ENCODE measurements at regions of chr1 and their contacts with region 1.

Region 1: DNA sequence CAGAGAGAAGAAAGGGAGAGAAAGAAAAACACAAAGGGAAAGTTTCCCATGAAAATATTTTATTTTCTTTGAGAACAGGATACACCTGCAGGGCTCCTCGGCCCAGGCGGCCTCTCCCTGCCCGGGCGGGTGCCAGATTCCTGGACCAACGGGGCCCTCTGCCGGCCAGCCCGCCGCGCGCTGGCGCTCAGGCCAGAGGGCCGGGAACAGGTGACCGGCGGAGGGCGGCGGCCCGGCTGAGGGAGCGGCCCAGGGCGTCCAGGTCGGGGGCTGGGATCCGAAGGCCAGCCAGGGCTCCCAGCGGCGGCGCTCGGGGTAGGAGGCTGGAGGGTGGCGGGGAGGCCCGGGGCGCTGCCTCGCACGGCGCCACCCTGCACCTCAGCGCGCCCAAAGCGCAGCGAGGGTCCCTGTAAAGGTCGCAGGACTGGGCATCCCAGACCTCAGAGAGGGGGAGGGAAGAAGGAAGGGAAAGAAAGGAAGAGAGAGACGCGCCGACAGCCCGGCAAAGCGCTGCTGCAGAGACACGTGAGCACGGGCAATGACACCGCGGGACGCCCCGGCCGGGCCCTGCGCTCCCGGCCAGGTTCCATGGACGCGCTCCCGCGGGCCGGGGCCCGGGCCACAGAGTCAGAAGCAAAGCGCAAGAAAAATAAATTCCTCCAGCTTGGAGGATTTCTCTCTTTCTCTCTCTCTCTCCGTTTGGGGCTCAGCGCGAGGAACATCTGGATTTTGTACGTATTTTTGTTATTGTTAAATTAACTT is 927 bp downstream of the WNT9A start:
- DNase-seq: peak; percentile 70 to 97
- H3K4me3 ChIP-seq: peak overlapping the region; percentile 64
- H3K27ac ChIP-seq: peak overlapping the region; percentile 62
- H3K4me1 ChIP-seq: peaks cover 23% of the 10 kb centered on the region
- H3K27me3 ChIP-seq: no peaks in the 10 kb centered on the region
- CTCF ChIP-seq: peak; percentile 81

Region 2: DNA sequence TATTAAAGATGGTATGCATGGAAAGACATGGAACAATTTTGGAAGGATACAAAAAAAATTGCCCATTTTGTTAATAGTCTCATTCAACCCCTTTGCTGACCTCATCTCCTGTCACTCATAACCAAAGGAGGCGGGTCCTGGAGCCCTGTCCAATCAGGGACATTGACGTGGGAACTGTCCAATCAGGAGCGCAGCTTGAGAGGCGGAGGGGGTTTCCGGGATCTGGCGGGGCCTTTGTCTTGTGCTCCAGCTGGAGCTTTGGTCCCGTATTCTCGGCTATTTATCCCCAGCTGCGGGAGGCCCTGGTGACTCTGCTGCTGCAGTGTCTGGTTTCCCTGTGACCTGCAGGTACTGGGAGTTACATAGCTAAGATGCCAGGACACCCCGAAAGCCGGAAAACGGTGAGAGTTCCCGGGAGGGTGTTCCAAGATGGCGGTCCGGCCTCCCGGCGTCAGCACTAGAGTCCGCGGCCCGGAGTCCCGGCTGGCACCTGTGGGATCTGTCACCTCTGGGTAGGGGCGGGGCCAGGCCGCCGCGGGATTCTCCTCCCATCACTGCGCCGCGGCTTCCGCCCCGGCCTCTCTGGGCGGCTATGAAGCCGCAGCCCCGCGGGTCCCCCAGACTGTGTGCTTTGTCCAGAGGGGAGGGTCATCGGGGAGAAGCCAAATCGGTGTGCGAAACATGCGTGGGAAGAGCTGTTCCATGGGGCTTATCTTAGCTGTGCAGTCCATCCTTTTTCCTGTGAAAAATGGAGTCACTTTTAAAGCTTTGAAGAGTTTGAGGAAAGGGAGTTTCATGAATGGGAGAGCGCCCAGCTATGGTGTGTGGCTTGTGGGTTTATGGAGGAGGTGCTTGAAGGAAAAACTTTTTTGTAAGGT is 383.2 kb before region 1 on chr1 and contains the start of gene ZNF678:
- CTCF ChIA-PET with region 1: no interaction called
- POLR2A ChIA-PET with region 1: no interaction called
- intact Hi-C with region 1: loop called (anchors 1 kb)
- DNase-seq: peak; percentile 85 to 94
- H3K4me3 ChIP-seq: peak within 1 kb of the TSS; percentile 76
- H3K27ac ChIP-seq: peak within 1 kb of the TSS; percentile 78
- H3K4me1 ChIP-seq: peaks cover 4% of the 10 kb centered on the region; the same call in 1 of the 2 replicates
- H3K27me3 ChIP-seq: no peaks in the 10 kb centered on the region
- CTCF ChIP-seq: no peak
- total RNA-seq, gene ZNF678: 4.1 and 6.1 TPM in 2 replicates

Region 3: GRCh38 chr1:227734856-227735538 is 211.8 kb before region 1 on chr1 and contains the starts of genes JMJD4 and SNAP47:
- CTCF ChIA-PET with region 1: no interaction called
- POLR2A ChIA-PET with region 1: interaction called, 16 read pairs
- intact Hi-C with region 1: no loop called
- DNase-seq: peak; percentile 75 to 97
- H3K4me3 ChIP-seq: peak within 1 kb of the TSS; percentile 99
- H3K27ac ChIP-seq: 0 out of 2 replicates have a peak within 1 kb of the TSS, but pooled peaks have one; percentile 1
- H3K4me1 ChIP-seq: peaks cover 17% of the 10 kb centered on the region; the same call in 1 of the 2 replicates
- H3K27me3 ChIP-seq: no peaks in the 10 kb centered on the region
- CTCF ChIP-seq: no peak
- total RNA-seq, gene JMJD4: 15.1 and 20.9 TPM in 2 replicates
- total RNA-seq, gene SNAP47: 66.3 and 70.2 TPM in 2 replicates

Region 4: GRCh38 chr1:227805606-227806197 is 141.1 kb before region 1 on chr1:
- CTCF ChIA-PET with region 1: interaction called, 4 read pairs
- POLR2A ChIA-PET with region 1: interaction called, 3 read pairs
- intact Hi-C with region 1: loop called (anchors 1 kb)
- DNase-seq: peak; percentile 82 to 94
- H3K4me3 ChIP-seq: no peak overlapping the region
- H3K27ac ChIP-seq: peak overlapping the region; percentile 45
- H3K4me1 ChIP-seq: peaks cover 20% of the 10 kb centered on the region
- H3K27me3 ChIP-seq: no peaks in the 10 kb centered on the region
- CTCF ChIP-seq: no peak

Region 5: DNA sequence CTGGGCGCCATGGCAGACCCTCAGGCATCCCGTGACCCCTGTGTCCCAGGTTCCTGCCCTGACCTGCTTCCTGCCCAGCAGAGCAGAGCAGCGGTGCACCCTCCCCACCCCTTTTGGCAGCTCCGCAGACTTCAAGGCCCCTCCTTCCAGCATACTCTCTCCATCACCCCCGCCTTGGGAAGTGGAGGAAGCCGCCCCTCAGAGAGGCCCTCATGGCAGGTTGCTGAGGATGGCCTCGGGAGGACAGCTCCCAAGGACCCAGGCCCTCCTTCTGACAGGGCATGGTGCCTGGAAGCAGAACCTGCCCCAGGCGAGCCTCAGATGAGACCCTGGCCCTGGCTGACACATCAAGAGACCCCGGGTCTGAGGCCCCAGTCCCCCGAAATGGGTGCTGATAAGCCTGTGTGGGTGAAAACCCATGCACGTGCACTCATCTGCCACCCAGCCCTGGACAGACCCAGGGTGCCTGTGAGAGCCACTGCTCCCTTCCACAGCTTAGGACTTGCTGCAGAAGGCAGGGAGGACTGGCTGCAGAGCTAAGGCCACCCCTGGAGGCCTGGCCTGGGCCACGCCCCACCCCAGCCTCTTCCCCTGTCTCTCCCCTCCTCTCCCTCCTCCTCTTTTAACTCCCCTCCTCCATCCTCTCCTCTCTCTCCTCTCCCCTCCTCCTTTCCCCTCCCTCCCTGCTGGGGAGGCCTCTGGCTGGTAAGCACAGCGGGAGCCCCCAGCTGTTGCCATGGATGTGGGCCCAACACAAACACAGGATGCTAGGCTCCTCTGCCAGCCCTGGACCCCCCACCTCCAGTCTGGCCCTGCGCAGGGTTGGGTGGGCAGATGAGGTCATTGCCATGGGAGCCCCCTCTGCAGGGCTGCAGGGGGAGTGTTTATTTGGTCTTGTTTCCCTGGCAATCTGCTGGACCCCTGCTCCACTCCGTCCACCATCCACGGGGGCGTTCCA is 32.8 kb before region 1 on chr1:
- CTCF ChIA-PET with region 1: no interaction called
- POLR2A ChIA-PET with region 1: interaction called, 7 read pairs
- intact Hi-C with region 1: loop called (anchors 1 kb)
- DNase-seq: no peak
- H3K4me3 ChIP-seq: no peak overlapping the region
- H3K27ac ChIP-seq: no peak overlapping the region
- H3K4me1 ChIP-seq: no peaks in the 10 kb centered on the region
- H3K27me3 ChIP-seq: no peaks in the 10 kb centered on the region
- CTCF ChIP-seq: no peak

Region 6: GRCh38 chr1:228065543-228066347 is 118.9 kb after region 1 on chr1:
- CTCF ChIA-PET with region 1: no interaction called
- POLR2A ChIA-PET with region 1: interaction called, 12 read pairs
- intact Hi-C with region 1: no loop called
- DNase-seq: no peak
- H3K4me3 ChIP-seq: no peak overlapping the region
- H3K27ac ChIP-seq: no peak overlapping the region
- H3K4me1 ChIP-seq: no peaks in the 10 kb centered on the region; the same call in 1 of the 2 replicates
- H3K27me3 ChIP-seq: peaks cover 10% of the 10 kb centered on the region; the same call in 1 of the 2 replicates
- CTCF ChIP-seq: no peak

Region 7: GRCh38 chr1:228120857-228121489 is 174.2 kb after region 1 on chr1:
- CTCF ChIA-PET with region 1: no interaction called
- POLR2A ChIA-PET with region 1: no interaction called
- intact Hi-C with region 1: no loop called
- DNase-seq: no peak
- H3K4me3 ChIP-seq: no peak overlapping the region
- H3K27ac ChIP-seq: no peak overlapping the region
- H3K4me1 ChIP-seq: no peaks in the 10 kb centered on the region
- H3K27me3 ChIP-seq: no peaks in the 10 kb centered on the region
- CTCF ChIP-seq: no peak